B cell (primary cell): ENCODE measurements at regions of chr15 and their contacts with region 1.

Region 1: DNA sequence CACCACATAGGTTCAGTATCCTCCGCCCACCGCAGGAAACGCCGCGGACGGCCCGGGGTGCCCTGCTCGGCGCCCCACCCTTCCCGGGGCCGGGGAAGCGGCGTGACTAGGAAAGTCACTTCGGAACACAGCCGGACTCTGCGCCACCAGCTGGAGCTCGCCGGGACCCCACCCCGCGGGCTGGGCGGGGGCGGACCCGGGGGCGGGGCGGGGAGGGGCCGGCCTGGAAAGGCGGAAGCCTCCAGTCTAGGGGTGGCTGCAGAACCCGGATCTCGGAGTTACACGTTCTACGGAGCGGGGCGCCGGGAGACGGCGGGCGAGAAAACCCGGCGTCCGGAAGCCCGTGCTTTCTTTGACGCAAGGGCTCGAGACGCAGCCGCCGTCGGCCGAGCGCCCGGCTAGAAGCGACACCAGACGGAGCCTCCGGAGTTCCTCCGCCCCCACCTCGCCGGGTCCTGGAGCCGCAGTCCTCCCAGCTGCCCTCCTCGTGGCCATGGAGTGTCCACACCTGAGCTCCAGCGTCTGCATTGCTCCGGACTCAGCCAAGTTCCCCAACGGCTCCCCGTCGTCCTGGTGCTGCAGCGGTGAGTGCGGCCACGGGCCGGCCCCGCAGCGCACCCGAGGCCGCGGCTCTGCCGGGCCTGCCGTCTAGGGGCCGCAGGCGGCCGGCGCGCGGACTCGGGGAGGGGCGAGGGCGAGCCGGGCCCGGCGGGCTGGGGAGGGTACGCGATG is at the start of gene USP3:
- DNase-seq: peak; percentile 97
- ATAC-seq: peak; percentile 70
- H3K4me3 ChIP-seq: peak within 1 kb of the TSS; percentile 78 to 95 (median 82)
- H3K4me3 Mint-ChIP-seq: peak within 1 kb of the TSS; percentile 96
- H3K27ac ChIP-seq: peak within 1 kb of the TSS; percentile 99
- H3K27ac Mint-ChIP-seq: peak within 1 kb of the TSS; percentile 100
- H3K4me1 ChIP-seq: peaks cover 67 to 77% of the 10 kb centered on the region in 2 donors
- H3K4me1 Mint-ChIP-seq: peaks cover 80% of the 10 kb centered on the region
- H3K27me3 ChIP-seq: no peaks in the 10 kb centered on the region
- H3K27me3 Mint-ChIP-seq: no peaks in the 10 kb centered on the region
- CTCF ChIP-seq: peak; percentile 41
- total RNA-seq, gene USP3: 152 and 178 TPM in 2 replicates

Region 2: DNA sequence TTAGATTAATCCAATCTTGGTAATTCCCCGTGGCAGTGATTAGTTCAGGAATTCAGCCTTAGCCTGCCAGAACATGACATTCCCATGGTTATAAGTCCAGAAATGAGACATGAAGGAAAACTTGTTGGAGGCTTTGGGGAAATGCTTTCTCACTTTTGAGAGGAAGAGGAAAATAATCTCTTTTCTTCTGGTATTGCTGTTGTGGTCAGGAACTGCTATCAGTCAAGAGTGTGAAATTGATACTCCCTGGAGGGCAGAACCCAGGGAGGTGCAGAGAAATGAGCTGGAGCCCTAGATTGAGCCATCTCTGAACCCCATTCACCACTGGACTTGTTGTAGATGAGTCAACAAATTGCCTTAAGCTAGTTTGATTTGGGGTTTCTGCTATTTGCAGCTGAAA is 265.6 kb before region 1 on chr15:
- CTCF ChIA-PET with region 1: no interaction called
- POLR2A ChIA-PET with region 1: no interaction called
- intact Hi-C with region 1: no loop called
- DNase-seq: no peak
- ATAC-seq: peak; percentile 36
- H3K4me3 ChIP-seq: no peak overlapping the region
- H3K4me3 Mint-ChIP-seq: no peak overlapping the region
- H3K27ac ChIP-seq: no peak overlapping the region
- H3K27ac Mint-ChIP-seq: no peak overlapping the region
- H3K4me1 ChIP-seq: peaks cover 27 to 29% of the 10 kb centered on the region in 2 donors
- H3K4me1 Mint-ChIP-seq: peaks cover 66% of the 10 kb centered on the region
- H3K27me3 ChIP-seq: no peaks in the 10 kb centered on the region
- H3K27me3 Mint-ChIP-seq: no peaks in the 10 kb centered on the region
- CTCF ChIP-seq: no peak

Region 3: GRCh38 chr15:63338170-63338569 is 166.2 kb before region 1 on chr15:
- CTCF ChIA-PET with region 1: no interaction called
- POLR2A ChIA-PET with region 1: no interaction called
- intact Hi-C with region 1: no loop called
- DNase-seq: no peak
- ATAC-seq: no peak
- H3K4me3 ChIP-seq: no peak overlapping the region
- H3K4me3 Mint-ChIP-seq: no peak overlapping the region
- H3K27ac ChIP-seq: no peak overlapping the region
- H3K27ac Mint-ChIP-seq: no peak overlapping the region
- H3K4me1 ChIP-seq: peaks cover 0 to 6% of the 10 kb centered on the region in 2 donors
- H3K4me1 Mint-ChIP-seq: peaks cover 6% of the 10 kb centered on the region
- H3K27me3 ChIP-seq: no peaks in the 10 kb centered on the region
- H3K27me3 Mint-ChIP-seq: no peaks in the 10 kb centered on the region
- CTCF ChIP-seq: no peak

Region 4: DNA sequence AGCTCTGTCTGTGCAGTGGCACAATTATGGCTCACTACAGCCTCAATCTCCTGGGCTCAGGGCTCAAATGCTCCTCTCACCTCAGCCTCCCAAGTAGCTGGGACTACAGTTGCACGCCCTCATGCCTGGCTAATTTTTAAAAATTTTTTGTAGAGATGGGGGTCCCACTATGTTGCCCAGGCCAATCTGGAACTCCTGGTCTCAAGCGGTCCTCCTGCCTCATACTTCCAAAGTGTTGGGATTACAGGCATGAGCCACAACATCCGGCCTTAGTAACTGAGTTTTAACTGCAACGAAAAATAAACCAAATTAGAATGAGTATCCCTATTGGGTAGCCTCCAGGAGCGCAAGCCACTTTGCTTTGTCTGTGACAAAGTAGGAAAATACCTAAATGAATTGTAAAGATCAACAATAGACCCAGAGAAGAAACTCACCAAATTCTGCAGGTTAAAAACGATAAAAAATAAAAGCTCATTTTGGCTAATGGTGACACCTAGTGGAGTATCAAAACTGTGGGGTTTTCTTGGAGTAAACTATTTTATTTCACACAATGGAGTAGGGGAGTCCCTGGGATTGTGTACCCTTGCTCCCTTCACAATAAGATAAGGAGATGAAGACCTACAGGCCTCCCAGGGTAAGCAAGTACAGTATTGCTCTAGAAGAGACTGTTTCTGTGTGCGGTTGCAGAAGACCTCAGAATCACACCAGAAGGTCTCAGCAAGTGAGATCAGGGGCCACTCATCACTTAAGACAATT is 101.7 kb before region 1 on chr15:
- CTCF ChIA-PET with region 1: interaction called, 4 read pairs
- POLR2A ChIA-PET with region 1: interaction called, 10 read pairs
- intact Hi-C with region 1: no loop called
- DNase-seq: peak; percentile 55
- ATAC-seq: peak; percentile 36
- H3K4me3 ChIP-seq: no peak overlapping the region
- H3K4me3 Mint-ChIP-seq: no peak overlapping the region
- H3K27ac ChIP-seq: no peak overlapping the region
- H3K27ac Mint-ChIP-seq: no peak overlapping the region
- H3K4me1 ChIP-seq: peaks cover 0 to 4% of the 10 kb centered on the region in 2 donors
- H3K4me1 Mint-ChIP-seq: peaks cover 11% of the 10 kb centered on the region
- H3K27me3 ChIP-seq: no peaks in the 10 kb centered on the region
- H3K27me3 Mint-ChIP-seq: peaks cover 5% of the 10 kb centered on the region
- CTCF ChIP-seq: peak; percentile 70

Region 5: GRCh38 chr15:63473999-63474809 is 30.2 kb before region 1 on chr15:
- CTCF ChIA-PET with region 1: interaction called, 148 read pairs
- POLR2A ChIA-PET with region 1: interaction called, 172 read pairs
- intact Hi-C with region 1: loop called (anchors 1 kb)
- DNase-seq: peak; percentile 85
- ATAC-seq: peak; percentile 69
- H3K4me3 ChIP-seq: peak overlapping the region in 4 of 5 experiments; percentile 4 to 38 (median 30)
- H3K4me3 Mint-ChIP-seq: peak overlapping the region; percentile 83
- H3K27ac ChIP-seq: peak overlapping the region; percentile 90 to 95
- H3K27ac Mint-ChIP-seq: peak overlapping the region; percentile 97
- H3K4me1 ChIP-seq: peaks cover 59 to 64% of the 10 kb centered on the region in 2 donors
- H3K4me1 Mint-ChIP-seq: peaks cover 69% of the 10 kb centered on the region
- H3K27me3 ChIP-seq: no peaks in the 10 kb centered on the region
- H3K27me3 Mint-ChIP-seq: no peaks in the 10 kb centered on the region
- CTCF ChIP-seq: peak; percentile 25

Region 6: DNA sequence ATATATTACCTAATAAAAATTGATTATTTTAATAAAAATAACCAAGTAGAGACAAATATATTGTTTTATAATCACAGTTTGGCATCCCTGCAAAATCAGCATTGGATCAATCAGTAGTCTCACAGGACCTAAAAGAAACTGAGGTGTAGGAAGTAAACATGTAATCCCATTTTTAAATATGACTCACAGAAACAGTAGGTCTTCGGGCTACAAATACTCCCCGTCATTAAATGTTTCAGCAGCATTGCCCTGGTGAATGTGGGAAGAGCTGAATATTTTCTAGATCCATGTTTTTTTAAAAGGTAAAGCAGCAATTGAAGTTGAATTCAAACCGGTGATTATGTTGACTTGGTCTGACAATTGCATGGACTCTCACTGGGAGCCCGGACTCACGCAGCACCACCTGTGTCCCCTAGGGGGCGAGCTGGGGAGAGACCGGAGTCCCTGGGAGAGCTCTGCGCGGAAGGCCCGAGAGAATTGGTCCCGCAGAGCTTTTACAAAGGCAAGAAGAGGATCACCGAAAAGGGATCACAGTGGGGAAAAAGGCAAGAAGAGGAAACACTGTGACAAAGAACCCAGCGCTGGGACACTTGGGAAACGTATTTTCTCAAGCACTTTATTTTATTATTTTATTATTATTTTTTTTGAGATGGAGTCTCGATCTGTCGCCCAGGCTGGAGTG is 17.2 kb before region 1 on chr15:
- CTCF ChIA-PET with region 1: interaction called, 142 read pairs
- POLR2A ChIA-PET with region 1: interaction called, 172 read pairs
- intact Hi-C with region 1: loop called (anchors 1 kb)
- DNase-seq: peak; percentile 86
- ATAC-seq: peak; percentile 68
- H3K4me3 ChIP-seq: no peak overlapping the region
- H3K4me3 Mint-ChIP-seq: peak overlapping the region; percentile 80
- H3K27ac ChIP-seq: no peak overlapping the region
- H3K27ac Mint-ChIP-seq: peak overlapping the region; percentile 89
- H3K4me1 ChIP-seq: peaks cover 53 to 78% of the 10 kb centered on the region in 2 donors
- H3K4me1 Mint-ChIP-seq: peaks cover 64% of the 10 kb centered on the region
- H3K27me3 ChIP-seq: no peaks in the 10 kb centered on the region
- H3K27me3 Mint-ChIP-seq: no peaks in the 10 kb centered on the region
- CTCF ChIP-seq: peak; percentile 90

Region 7: DNA sequence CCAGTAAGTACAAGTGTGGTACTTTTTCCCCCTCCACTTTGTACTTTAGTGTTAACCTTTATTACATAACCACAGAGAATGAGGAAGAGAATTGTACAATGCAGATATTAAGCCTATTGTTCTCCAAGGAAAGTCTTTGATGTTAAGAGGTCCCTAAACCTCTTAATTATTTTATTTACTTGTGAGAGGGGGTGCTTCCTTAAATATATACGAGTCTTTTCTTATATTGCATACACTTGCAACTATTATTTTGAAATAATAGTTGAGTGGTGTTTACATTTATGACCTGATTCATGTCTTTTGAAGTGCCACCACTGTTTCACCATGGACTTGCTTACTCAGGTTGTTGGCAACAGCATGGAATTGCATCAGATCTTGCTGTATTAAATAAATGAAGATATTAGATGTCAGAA is 10.1 kb after region 1 on chr15:
- CTCF ChIA-PET with region 1: interaction called, 15 read pairs
- POLR2A ChIA-PET with region 1: no interaction called
- intact Hi-C with region 1: no loop called
- DNase-seq: no peak
- ATAC-seq: peak; percentile 37
- H3K4me3 ChIP-seq: no peak overlapping the region
- H3K4me3 Mint-ChIP-seq: peak overlapping the region; percentile 14
- H3K27ac ChIP-seq: peak overlapping the region in 1 of 2 donors; percentile 60
- H3K27ac Mint-ChIP-seq: no peak overlapping the region
- H3K4me1 ChIP-seq: peaks cover 66 to 87% of the 10 kb centered on the region in 2 donors
- H3K4me1 Mint-ChIP-seq: peaks cover 81% of the 10 kb centered on the region
- H3K27me3 ChIP-seq: no peaks in the 10 kb centered on the region
- H3K27me3 Mint-ChIP-seq: no peaks in the 10 kb centered on the region
- CTCF ChIP-seq: no peak

Region 8: GRCh38 chr15:63539521-63539920 is 35.1 kb after region 1 on chr15:
- CTCF ChIA-PET with region 1: interaction called, 51 read pairs
- POLR2A ChIA-PET with region 1: interaction called, 4 read pairs
- intact Hi-C with region 1: loop called (anchors 5 kb)
- DNase-seq: no peak
- ATAC-seq: no peak
- H3K4me3 ChIP-seq: no peak overlapping the region
- H3K4me3 Mint-ChIP-seq: no peak overlapping the region
- H3K27ac ChIP-seq: peak overlapping the region in 1 of 2 donors; percentile 68
- H3K27ac Mint-ChIP-seq: peak overlapping the region; percentile 48
- H3K4me1 ChIP-seq: peaks cover 41 to 58% of the 10 kb centered on the region in 2 donors
- H3K4me1 Mint-ChIP-seq: peaks cover 74% of the 10 kb centered on the region
- H3K27me3 ChIP-seq: no peaks in the 10 kb centered on the region
- H3K27me3 Mint-ChIP-seq: no peaks in the 10 kb centered on the region
- CTCF ChIP-seq: no peak

Region 9: DNA sequence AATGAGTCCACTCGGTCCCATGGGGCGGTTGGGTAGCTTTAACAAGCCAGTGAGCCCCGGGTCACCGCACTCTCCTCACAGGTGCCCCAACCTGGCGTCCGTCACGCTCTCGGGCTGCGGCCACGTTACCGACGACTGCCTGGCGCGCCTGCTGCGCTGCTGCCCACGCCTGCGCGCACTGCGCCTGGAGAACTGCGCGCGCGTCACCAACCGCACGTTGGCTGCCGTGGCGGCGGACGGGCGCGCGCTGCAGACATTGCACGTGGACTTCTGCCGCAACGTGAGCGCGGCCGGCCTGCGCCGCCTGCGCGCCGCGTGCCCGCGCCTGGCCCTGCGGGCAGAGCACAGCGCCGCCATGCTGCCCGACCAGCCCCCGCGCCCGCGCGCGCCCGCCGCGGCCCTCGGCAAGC is 96.2 kb after region 1 on chr15:
- CTCF ChIA-PET with region 1: interaction called, 17 read pairs
- POLR2A ChIA-PET with region 1: interaction called, 27 read pairs
- intact Hi-C with region 1: loop called (anchors 1 kb)
- DNase-seq: peak; percentile 96
- ATAC-seq: peak; percentile 76
- H3K4me3 ChIP-seq: peak overlapping the region in 4 of 5 experiments; percentile 67 to 86 (median 74)
- H3K4me3 Mint-ChIP-seq: peak overlapping the region; percentile 96
- H3K27ac ChIP-seq: peak overlapping the region; percentile 65 to 76
- H3K27ac Mint-ChIP-seq: peak overlapping the region; percentile 96
- H3K4me1 ChIP-seq: peaks cover 44 to 57% of the 10 kb centered on the region in 2 donors
- H3K4me1 Mint-ChIP-seq: peaks cover 73% of the 10 kb centered on the region
- H3K27me3 ChIP-seq: no peaks in the 10 kb centered on the region
- H3K27me3 Mint-ChIP-seq: no peaks in the 10 kb centered on the region
- CTCF ChIP-seq: no peak